ENCODE measurements at regions of chr7 and their contacts with region 1.

Region 1: DNA sequence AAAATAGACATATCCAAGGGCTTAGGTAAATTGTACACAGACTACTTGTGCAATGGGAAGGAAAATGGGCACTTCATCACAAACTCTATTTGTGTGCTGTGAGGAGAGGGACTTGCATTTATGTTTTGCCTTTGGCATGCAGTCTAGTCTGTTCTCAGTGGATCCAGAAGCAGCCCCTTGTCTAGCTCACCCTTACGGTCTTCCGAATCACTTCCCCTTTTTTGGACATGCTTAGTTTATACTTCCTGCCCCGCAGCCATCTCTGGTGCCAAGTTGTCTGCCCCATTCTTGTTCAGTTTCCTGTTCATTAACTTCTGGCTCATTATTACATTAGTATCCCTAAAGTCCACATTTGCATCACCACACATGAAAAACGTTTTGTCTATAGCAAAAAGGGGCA is 161.6 kb downstream of the NRCAM start:
- DNase-seq: peak; percentile 81
- H3K4me3 ChIP-seq: no peak overlapping the region
- H3K27ac ChIP-seq: peak overlapping the region; percentile 88
- H3K4me1 ChIP-seq: peaks cover 70% of the 10 kb centered on the region
- H3K27me3 ChIP-seq: no peaks in the 10 kb centered on the region
- CTCF ChIP-seq: no peak
- POLR2A ChIP-seq: peak; percentile 54

Region 2: DNA sequence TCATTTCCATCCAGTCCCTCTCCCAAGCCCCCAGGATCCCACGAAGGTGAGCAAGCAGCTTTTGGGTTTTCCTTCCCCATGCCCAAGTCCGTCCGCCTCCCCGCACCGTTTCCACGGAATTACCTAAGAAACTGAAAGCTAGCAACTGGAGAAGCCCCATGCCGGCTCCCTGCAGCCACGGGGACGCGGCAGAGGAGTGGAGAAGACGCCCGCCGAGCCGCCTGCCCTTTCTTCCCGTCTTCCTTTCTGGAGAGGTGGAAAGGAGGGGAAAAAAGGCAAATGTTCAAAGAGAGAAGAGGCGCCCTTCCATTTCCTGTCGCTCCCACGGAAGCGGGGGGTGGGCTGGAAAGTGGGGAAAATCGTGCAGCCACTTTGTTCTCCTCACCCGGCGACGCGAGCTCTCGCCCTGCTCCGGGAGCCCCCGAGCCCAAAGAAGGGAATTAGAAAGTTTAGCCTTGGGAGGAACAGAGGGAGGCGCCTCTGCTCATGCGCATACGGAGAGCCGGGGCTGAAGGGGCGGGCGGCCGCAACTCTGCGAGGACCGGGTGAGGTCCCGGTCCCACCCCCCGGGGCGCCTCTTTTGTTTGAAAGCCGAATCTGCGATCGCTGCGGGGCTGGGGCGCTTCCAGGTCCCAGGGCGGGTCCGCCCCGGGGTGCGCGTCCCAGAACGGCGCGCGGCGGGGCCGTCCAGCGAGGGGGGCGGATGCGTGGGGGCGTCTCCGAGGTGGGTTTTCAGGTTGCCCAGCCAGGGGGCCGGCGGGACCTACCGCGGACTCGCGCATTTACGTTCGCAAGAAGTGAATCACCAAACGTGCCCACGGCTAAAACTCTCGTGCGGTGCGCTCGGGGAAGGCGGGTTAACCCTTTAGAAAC is 291.6 kb before region 1 on chr7 and contains the start of gene LAMB1:
- CTCF ChIA-PET with region 1: no interaction called
- POLR2A ChIA-PET with region 1: no interaction called
- dilution Hi-C with region 1: no loop called
- intact Hi-C with region 1: no loop called
- DNase-seq: peak; percentile 83
- H3K4me3 ChIP-seq: peak within 1 kb of the TSS; percentile 84 to 95 (median 90)
- H3K27ac ChIP-seq: peak within 1 kb of the TSS; percentile 99
- H3K4me1 ChIP-seq: peaks cover 45% of the 10 kb centered on the region
- H3K27me3 ChIP-seq: no peaks in the 10 kb centered on the region
- CTCF ChIP-seq: no peak
- POLR2A ChIP-seq: peak; percentile 97
- total RNA-seq, gene LAMB1: 703 and 734 TPM in 2 replicates

Region 3: DNA sequence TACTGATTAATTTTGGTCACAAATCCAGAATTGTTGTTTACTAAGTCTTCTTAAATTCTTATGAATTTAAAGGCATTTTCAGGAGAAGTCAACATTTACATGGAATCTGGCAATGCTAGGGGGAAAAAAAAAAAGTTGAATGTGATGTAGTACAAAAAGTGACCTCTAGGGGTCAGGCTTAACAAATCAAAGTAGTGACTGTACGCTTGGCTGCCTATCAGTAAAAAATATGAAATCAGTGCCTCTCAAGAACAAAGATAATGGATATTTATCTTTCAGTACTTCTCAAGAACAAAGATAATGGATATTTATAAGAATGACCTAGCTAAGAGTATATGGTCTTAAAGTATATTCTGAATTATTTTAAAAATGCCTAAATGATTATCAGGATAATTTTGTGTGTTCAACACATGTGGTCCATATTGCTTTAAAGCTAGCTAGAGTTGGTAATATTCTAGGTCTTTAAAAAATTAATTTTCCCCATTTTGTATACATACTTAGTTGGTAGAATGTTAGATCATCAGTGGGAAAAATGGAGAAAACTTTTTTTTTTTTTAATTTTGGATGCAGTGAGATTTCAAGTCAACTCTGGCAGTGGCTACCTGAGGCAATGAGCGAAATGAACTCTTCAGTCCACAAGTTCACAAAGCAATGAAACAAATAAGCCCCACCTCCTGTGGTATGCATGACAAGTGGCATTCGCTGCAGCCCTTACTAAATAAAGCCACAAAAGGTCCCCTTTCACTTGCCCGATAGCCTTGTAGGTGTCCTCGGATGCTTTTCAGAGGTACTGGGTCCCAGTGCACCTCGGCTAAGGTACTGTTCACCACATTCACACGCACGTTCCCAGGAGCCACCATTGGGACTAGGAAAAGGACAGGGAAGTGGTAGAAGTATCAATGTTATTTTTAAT is 113.3 kb before region 1 on chr7:
- CTCF ChIA-PET with region 1: interaction called, 3 read pairs
- POLR2A ChIA-PET with region 1: interaction called, 3 read pairs
- dilution Hi-C with region 1: no loop called
- intact Hi-C with region 1: loop called (anchors 1 kb)
- DNase-seq: peak; percentile 86
- H3K4me3 ChIP-seq: no peak overlapping the region
- H3K27ac ChIP-seq: no peak overlapping the region
- H3K4me1 ChIP-seq: no peaks in the 10 kb centered on the region
- H3K27me3 ChIP-seq: no peaks in the 10 kb centered on the region
- CTCF ChIP-seq: peak; percentile 32 to 54
- POLR2A ChIP-seq: no peak

Region 4: DNA sequence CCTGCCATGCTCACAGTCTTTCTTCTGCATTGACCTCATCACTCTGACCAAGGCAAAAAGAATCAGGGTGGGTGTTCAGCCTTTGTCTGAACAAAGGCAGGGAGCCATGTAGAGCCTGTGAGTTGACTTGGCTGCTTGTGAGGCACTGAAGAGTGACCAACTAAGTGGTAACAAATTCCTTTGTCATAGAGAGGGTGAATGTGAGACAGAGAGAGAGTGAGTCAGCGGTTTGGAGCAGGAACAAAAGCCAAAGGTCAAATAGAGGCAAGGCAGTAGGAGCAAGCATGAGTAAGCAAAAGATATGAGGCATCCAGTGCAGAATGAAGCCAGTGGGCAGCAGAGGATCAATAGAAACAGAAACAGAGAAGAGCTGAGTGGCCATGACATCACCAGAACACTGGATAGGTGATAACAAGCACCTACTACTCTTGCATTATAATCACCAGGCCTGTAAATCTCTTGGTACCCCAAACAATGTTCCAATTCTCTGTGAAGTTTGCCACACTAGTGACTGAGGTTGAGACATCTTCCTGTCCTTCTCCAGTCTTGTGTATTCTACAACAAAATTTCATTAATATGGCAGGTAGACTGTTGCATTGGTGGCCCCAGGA is 48.3 kb before region 1 on chr7:
- CTCF ChIA-PET with region 1: interaction called, 3 read pairs
- POLR2A ChIA-PET with region 1: no interaction called
- dilution Hi-C with region 1: no loop called
- intact Hi-C with region 1: loop called (anchors 1 kb)
- DNase-seq: peak; percentile 91
- H3K4me3 ChIP-seq: no peak overlapping the region
- H3K27ac ChIP-seq: peak overlapping the region; percentile 79
- H3K4me1 ChIP-seq: peaks cover 30% of the 10 kb centered on the region
- H3K27me3 ChIP-seq: no peaks in the 10 kb centered on the region
- CTCF ChIP-seq: no peak
- POLR2A ChIP-seq: peak; percentile 57

Region 5: DNA sequence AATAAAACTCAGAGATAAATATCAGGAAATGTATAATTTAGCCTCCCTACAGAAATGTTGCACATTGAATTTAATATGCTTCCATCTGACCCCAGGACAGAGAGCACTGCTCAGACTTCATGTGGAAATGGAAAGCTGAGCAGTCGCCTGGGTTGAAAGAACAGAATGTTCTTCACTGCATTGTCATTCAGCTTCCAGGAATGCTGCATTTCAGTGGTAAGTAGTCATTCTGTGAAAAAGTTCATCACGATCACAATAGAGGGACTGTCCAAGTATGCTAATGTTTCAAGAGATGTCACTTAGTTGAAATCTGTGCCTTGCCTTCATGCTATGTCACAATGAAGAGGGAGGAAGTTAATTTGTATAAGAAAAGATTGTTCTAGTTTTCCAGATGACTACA is 14.3 kb after region 1 on chr7:
- CTCF ChIA-PET with region 1: interaction called, 23 read pairs
- POLR2A ChIA-PET with region 1: interaction called, 3 read pairs
- dilution Hi-C with region 1: no loop called
- intact Hi-C with region 1: loop called (anchors 1 kb)
- DNase-seq: peak; percentile 60
- H3K4me3 ChIP-seq: no peak overlapping the region
- H3K27ac ChIP-seq: peak overlapping the region; percentile 95
- H3K4me1 ChIP-seq: peaks cover 60% of the 10 kb centered on the region
- H3K27me3 ChIP-seq: no peaks in the 10 kb centered on the region
- CTCF ChIP-seq: no peak
- POLR2A ChIP-seq: no peak

Region 6: GRCh38 chr7:108415821-108416536 is 121.4 kb after region 1 on chr7:
- CTCF ChIA-PET with region 1: no interaction called
- POLR2A ChIA-PET with region 1: no interaction called
- dilution Hi-C with region 1: no loop called
- intact Hi-C with region 1: loop called (anchors 1 kb)
- DNase-seq: peak; percentile 77
- H3K4me3 ChIP-seq: no peak overlapping the region
- H3K27ac ChIP-seq: peak overlapping the region; percentile 88
- H3K4me1 ChIP-seq: peaks cover 65% of the 10 kb centered on the region
- H3K27me3 ChIP-seq: no peaks in the 10 kb centered on the region
- CTCF ChIP-seq: no peak
- POLR2A ChIP-seq: no peak

Region 7: GRCh38 chr7:108486291-108486966 is 191.8 kb after region 1 on chr7:
- CTCF ChIA-PET with region 1: no interaction called
- POLR2A ChIA-PET with region 1: no interaction called
- dilution Hi-C with region 1: no loop called
- intact Hi-C with region 1: loop called (anchors 1 kb)
- DNase-seq: peak; percentile 46
- H3K4me3 ChIP-seq: no peak overlapping the region
- H3K27ac ChIP-seq: peak overlapping the region; percentile 18
- H3K4me1 ChIP-seq: peaks cover 34% of the 10 kb centered on the region
- H3K27me3 ChIP-seq: no peaks in the 10 kb centered on the region
- CTCF ChIP-seq: no peak
- POLR2A ChIP-seq: no peak

Measured in endothelial cell of umbilical vein (primary cell).